ENCODE measurements at regions of chrX and their contacts with region 1.

Region 1: GRCh38 chrX:30570505-30570904 is 7.1 kb downstream of the TASL start:
- DNase-seq: no peak
- ATAC-seq: peak; percentile 3; the same call in 1 of the 3 replicates
- H3K4me3 ChIP-seq: no peak overlapping the region
- H3K27ac ChIP-seq: no peak overlapping the region
- H3K4me1 ChIP-seq: peaks cover 19% of the 10 kb centered on the region
- H3K27me3 ChIP-seq: no peaks in the 10 kb centered on the region
- CTCF ChIP-seq: peak; percentile 33 to 57 (median 44); a peak in 5 of 6 replicates
- EP300 ChIP-seq: no peak
- POLR2A ChIP-seq: no peak
- RAD21 ChIP-seq: peak; percentile 65

Region 2: DNA sequence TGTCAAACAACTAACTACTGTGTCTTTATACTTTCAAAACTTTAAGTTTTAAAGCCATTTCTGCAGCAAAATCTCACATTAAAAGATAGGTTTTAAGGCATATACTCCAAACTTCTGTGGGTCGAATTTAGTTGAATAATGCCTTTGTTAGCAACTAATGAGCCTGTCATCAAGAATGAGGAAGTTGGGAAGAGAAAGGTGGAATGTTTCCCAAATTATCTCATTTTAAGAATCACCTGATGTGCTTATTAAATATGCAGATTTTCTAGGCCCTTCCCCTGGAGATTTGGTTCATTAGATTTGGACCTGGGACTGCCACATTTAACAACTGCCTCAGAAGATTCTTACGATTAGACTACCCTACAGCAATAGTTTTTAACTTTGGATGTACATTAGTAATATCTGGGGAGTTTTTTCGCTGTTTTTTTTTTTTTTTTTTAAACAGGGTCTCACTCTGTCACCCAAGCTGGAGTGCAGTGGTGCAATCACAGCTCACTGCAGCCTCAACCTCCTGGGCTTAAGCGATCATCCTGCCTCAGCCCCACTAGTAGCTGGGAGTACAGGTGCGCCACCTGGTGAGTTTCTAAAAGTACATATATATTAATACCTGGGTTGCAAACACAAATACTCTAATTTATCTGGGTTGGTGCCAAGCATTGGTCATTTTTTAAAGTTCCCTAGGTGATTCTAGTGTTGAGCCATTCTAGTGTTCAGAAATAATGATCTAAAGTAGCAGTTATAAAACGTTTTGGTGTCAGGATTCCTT is 23.1 kb after region 1 on chrX:
- CTCF ChIA-PET with region 1: interaction called, 282 read pairs
- POLR2A ChIA-PET with region 1: interaction called, 32 read pairs
- RAD21 ChIA-PET with region 1: interaction called, 163 read pairs
- SMC1A ChIA-PET with region 1: interaction called, 208 read pairs
- in situ Hi-C with region 1: no loop called
- intact Hi-C with region 1: loop called (anchors 1 kb)
- DNase-seq: no peak
- ATAC-seq: peak; percentile 72
- H3K4me3 ChIP-seq: no peak overlapping the region
- H3K27ac ChIP-seq: peak overlapping the region; percentile 64
- H3K4me1 ChIP-seq: peaks cover 53% of the 10 kb centered on the region
- H3K27me3 ChIP-seq: no peaks in the 10 kb centered on the region
- CTCF ChIP-seq: peak; percentile 28 to 57 (median 31); a peak in 4 of 6 replicates
- EP300 ChIP-seq: no peak
- POLR2A ChIP-seq: no peak
- RAD21 ChIP-seq: peak; percentile 73

Region 3: DNA sequence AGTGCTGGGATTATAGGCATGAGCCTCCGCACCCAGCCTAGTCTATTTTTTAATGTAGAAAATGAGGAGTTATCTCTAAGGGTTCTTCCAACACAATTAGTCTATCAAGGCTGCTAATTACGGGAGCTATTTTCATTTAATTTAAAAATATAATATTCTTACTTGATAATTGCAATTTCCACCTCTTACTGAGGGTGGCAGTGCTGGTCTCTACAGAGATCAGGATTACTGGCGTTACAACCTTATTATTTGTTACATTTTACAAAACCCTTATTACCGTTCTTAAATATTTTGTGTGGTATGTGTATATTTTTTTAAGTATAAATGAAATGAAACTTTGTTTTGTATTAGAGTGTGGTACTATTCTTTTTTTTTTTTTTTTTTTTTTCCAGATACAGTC is 65.1 kb after region 1 on chrX:
- CTCF ChIA-PET with region 1: interaction called, 11 read pairs
- POLR2A ChIA-PET with region 1: no interaction called
- RAD21 ChIA-PET with region 1: interaction called, 4 read pairs
- SMC1A ChIA-PET with region 1: interaction called, 4 read pairs
- in situ Hi-C with region 1: no loop called
- intact Hi-C with region 1: no loop called
- DNase-seq: no peak
- ATAC-seq: peak; percentile 42; the same call in 2 of the 3 replicates
- H3K4me3 ChIP-seq: no peak overlapping the region
- H3K27ac ChIP-seq: no peak overlapping the region
- H3K4me1 ChIP-seq: no peaks in the 10 kb centered on the region
- H3K27me3 ChIP-seq: no peaks in the 10 kb centered on the region
- CTCF ChIP-seq: peak; percentile 27 to 43 (median 36); a peak in 4 of 6 replicates
- EP300 ChIP-seq: no peak
- POLR2A ChIP-seq: no peak
- RAD21 ChIP-seq: peak; percentile 55

Region 4: DNA sequence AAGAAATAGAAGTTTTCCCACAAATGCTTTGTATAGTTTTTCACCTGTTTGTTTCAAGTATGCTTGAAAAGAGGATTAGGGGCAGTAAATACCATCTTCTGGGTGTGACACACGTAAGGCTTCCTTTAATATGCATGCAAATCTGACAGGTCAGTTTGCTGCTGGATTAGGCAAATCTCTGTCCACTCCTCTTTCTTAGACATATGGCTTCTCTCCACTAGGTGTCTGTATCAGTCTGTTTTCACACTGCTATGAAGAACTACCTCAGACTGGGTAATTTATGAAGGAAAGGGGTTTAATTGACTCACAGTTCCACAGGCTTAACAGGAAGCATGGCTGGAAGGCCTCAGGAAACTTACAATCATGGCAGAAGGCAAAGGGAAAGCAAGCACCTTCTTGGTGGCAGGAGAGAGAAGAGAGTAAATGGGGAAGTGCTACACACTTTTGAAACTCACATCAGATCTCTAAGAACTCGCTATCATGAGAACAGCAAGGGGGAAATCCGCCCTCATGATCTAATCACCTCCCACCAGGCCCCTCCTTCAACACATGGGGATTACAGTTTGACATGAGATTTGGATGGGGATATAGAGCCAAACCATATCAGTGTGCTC is 251.7 kb after region 1 on chrX:
- CTCF ChIA-PET with region 1: no interaction called
- POLR2A ChIA-PET with region 1: no interaction called
- RAD21 ChIA-PET with region 1: no interaction called
- SMC1A ChIA-PET with region 1: no interaction called
- in situ Hi-C with region 1: no loop called
- intact Hi-C with region 1: loop called (anchors 5 kb)
- DNase-seq: peak; percentile 34
- ATAC-seq: peak; percentile 94
- H3K4me3 ChIP-seq: no peak overlapping the region
- H3K27ac ChIP-seq: peak overlapping the region; percentile 37; the same call in 1 of the 2 replicates
- H3K4me1 ChIP-seq: no peaks in the 10 kb centered on the region; the same call in 1 of the 2 replicates
- H3K27me3 ChIP-seq: no peaks in the 10 kb centered on the region
- CTCF ChIP-seq: 0 out of 6 replicates have a peak, but pooled peaks of 1 of the 3 experiments have one; percentile 1
- EP300 ChIP-seq: no peak
- POLR2A ChIP-seq: no peak
- RAD21 ChIP-seq: peak; percentile 18; the same call in 1 of the 2 replicates